ENCODE measurements at regions of chr10 and their contacts with region 1.

Region 1: DNA sequence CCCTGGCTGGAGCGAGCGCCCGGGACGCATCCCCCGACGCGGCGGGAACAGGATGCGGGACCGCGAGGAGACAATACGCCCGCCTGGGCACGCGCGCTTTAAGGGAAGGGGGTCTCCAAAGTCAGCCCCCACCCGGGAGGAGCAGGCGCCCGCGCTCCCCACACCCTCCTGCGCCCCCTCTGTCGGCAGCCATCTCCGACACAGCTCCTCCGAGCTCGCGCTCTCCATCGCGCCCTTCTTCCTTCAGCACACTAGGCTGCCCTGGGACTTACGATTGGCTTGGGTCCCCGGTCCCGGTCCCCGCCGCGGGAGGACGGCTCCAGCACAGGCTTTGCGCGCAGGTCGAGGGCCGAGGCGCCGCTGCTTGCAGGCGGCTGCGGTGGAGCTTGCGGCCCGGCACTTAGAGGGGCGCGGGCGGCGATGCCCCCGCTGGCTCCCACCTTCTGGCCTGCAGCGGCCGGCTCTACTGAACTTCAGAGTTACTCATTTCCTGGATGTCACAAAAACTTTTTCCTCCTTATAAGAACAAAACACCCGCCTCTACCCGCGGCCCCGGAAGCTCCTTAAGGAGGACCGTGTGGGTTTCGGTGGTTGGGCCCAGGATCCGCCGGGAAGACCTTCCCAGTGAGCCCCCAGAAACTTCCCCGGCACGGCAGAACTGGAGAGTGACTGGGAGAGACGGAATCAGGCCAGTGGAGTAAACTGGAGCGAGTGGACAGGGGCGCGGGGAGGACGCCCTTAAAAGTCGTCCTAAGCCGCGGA is at the start of gene ITPRIP:
- DNase-seq: peak; percentile 87
- ATAC-seq: peak; percentile 75
- H3K4me3 ChIP-seq: peak within 1 kb of the TSS; percentile 94 to 98 (median 97)
- H3K4me3 Mint-ChIP-seq: peak within 1 kb of the TSS; percentile 100
- H3K27ac ChIP-seq: peak within 1 kb of the TSS; percentile 80 to 83
- H3K27ac Mint-ChIP-seq: peak within 1 kb of the TSS; percentile 100
- H3K4me1 ChIP-seq: peaks cover 34 to 54% of the 10 kb centered on the region in 2 donors
- H3K4me1 Mint-ChIP-seq: peaks cover 53% of the 10 kb centered on the region
- H3K27me3 ChIP-seq: no peaks in the 10 kb centered on the region
- H3K27me3 Mint-ChIP-seq: no peaks in the 10 kb centered on the region
- CTCF ChIP-seq: no peak
- total RNA-seq, gene ITPRIP: 21.3 and 22.5 TPM in 2 replicates

Region 2: DNA sequence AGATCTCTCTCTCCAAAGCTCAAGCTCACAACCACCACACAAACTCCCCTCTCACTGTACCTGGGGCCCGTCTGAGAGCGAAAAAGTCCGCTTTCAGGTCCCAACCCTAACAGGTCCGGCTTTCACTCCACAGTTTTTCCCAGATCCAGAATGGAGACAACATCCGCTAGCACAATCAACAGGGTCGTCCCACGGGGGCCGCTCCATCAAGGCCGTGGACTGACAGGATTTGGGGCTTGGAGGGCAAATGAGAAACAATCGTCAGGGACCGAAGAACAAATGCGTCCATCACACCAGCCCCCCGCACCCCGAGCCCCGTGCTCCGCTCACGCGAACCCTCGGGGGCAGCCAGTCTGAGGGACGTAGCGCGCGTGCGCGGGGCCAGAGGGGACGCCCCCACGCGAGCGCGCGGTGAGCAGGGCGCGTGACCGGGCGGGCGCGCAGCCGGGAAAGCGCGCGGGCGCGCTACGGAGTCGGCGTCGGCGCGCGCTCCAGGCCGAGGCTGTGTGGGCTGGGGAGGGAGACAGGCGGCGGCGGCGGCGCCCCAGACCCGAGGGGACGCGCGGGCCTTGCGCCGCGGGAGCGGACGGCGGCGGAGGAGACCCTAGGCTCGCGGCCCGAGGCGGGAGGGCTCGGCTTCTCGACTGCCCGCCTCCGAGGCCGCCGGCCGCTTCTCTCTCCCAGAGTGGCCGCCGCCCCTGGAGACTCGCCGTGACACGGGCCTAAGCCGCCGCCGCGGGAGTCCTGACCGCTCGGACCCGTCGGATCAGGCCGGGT is 371.3 kb before region 1 on chr10 and contains the start of gene SLK:
- CTCF ChIA-PET with region 1: no interaction called
- POLR2A ChIA-PET with region 1: no interaction called
- intact Hi-C with region 1: loop called (anchors 5 kb)
- DNase-seq: peak; percentile 94
- ATAC-seq: peak; percentile 87
- H3K4me3 ChIP-seq: peak within 1 kb of the TSS; percentile 88 to 99 (median 95)
- H3K4me3 Mint-ChIP-seq: peak within 1 kb of the TSS; percentile 97
- H3K27ac ChIP-seq: peak within 1 kb of the TSS; percentile 81 to 88
- H3K27ac Mint-ChIP-seq: peak within 1 kb of the TSS; percentile 86
- H3K4me1 ChIP-seq: peaks cover 21 to 25% of the 10 kb centered on the region in 2 donors
- H3K4me1 Mint-ChIP-seq: peaks cover 32% of the 10 kb centered on the region
- H3K27me3 ChIP-seq: no peaks in the 10 kb centered on the region
- H3K27me3 Mint-ChIP-seq: no peaks in the 10 kb centered on the region
- CTCF ChIP-seq: no peak
- total RNA-seq, gene SLK: 22.6 and 24.5 TPM in 2 replicates

Region 3: GRCh38 chr10:104268716-104269645 is 69.2 kb before region 1 on chr10 and contains the start of gene GSTO2:
- CTCF ChIA-PET with region 1: interaction called, 4 read pairs
- POLR2A ChIA-PET with region 1: interaction called, 6 read pairs
- intact Hi-C with region 1: loop called (anchors 1 kb)
- DNase-seq: peak; percentile 99
- ATAC-seq: peak; percentile 97
- H3K4me3 ChIP-seq: peak within 1 kb of the TSS; percentile 68 to 90 (median 86)
- H3K4me3 Mint-ChIP-seq: peak within 1 kb of the TSS; percentile 88
- H3K27ac ChIP-seq: peak within 1 kb of the TSS; percentile 90 to 95
- H3K27ac Mint-ChIP-seq: peak within 1 kb of the TSS; percentile 92
- H3K4me1 ChIP-seq: peaks cover 20 to 22% of the 10 kb centered on the region in 2 donors
- H3K4me1 Mint-ChIP-seq: peaks cover 37% of the 10 kb centered on the region
- H3K27me3 ChIP-seq: peaks cover 0 to 1% (median under 1%) of the 10 kb centered on the region in 4 experiments
- H3K27me3 Mint-ChIP-seq: no peaks in the 10 kb centered on the region
- CTCF ChIP-seq: no peak
- total RNA-seq, gene GSTO2: 0.89 and 1.4 TPM in 2 replicates

Region 4: GRCh38 chr10:104308439-104308903 is 29.7 kb before region 1 on chr10:
- CTCF ChIA-PET with region 1: interaction called, 594 read pairs
- POLR2A ChIA-PET with region 1: interaction called, 7 read pairs
- intact Hi-C with region 1: loop called (anchors 1 kb)
- DNase-seq: no peak
- ATAC-seq: no peak
- H3K4me3 ChIP-seq: no peak overlapping the region
- H3K4me3 Mint-ChIP-seq: no peak overlapping the region
- H3K27ac ChIP-seq: peak overlapping the region in 1 of 2 donors; percentile 49
- H3K27ac Mint-ChIP-seq: peak overlapping the region; percentile 76
- H3K4me1 ChIP-seq: peaks cover 13 to 21% of the 10 kb centered on the region in 2 donors
- H3K4me1 Mint-ChIP-seq: peaks cover 23% of the 10 kb centered on the region
- H3K27me3 ChIP-seq: no peaks in the 10 kb centered on the region
- H3K27me3 Mint-ChIP-seq: no peaks in the 10 kb centered on the region
- CTCF ChIP-seq: no peak

Measured in B cell (primary cell).